K562 (cell line): ENCODE measurements at regions of chr17 and their contacts with region 1.

Region 1: GRCh38 chr17:17641621-17642409 is 39.4 kb upstream of the RAI1 start:
- DNase-seq: peak; percentile 50 to 80 (median 58)
- ATAC-seq: peak; percentile 95
- H3K4me3 ChIP-seq: no peak overlapping the region
- H3K27ac ChIP-seq: no peak overlapping the region
- H3K4me1 ChIP-seq: no peaks in the 10 kb centered on the region; a peak in 1 of 5 replicates
- H3K27me3 ChIP-seq: peaks cover 0 to 6% of the 10 kb centered on the region in 2 experiments; a peak in 2 of 5 replicates
- CTCF ChIP-seq: peak; percentile 82 to 89 (median 87)
- EP300 ChIP-seq: no peak
- POLR2A ChIP-seq: no peak
- RAD21 ChIP-seq: peak; percentile 83 to 93

Region 2: DNA sequence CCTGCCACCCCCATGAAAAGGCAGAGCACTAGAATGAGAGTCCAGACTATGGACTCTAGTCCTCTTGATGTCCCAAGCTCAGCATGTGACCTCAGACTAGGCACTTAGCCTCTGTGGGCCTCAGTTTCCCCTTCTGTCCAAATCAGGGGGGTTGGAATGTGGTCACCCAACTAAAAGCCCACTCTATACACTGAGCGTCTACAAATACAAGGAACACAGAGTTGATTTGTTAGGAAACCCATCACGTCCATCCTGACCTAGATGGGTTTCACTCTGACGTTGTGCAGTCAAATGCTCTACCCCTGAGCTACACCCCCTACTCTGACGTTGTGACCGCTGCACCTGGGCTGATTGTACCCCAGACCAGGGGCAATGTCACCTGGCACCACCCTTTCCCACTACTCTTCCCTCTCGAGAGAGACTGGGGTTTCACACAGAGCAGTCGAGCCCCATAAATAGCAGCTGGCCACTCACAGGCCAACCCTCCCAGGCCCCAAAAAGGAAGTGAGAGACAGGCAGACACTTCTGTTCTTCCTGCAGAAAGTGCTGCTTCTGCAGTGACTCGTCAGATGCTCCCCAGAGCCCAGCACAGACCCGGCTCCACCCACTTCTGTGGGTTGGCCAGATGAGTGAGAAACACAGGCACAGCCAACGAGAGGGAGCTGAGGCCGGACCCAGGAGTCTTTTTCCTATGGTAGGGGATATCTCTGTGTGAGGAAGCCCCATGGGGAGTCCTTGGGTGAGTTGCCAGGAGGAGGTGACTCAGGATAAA is 653.8 kb before region 1 on chr17:
- CTCF ChIA-PET with region 1: no interaction called
- POLR2A ChIA-PET with region 1: no interaction called
- in situ Hi-C with region 1: loop called (anchors 25 kb)
- intact Hi-C with region 1: no loop called
- DNase-seq: peak; percentile 24 to 35 (median 31)
- ATAC-seq: peak; percentile 76
- H3K4me3 ChIP-seq: no peak overlapping the region
- H3K27ac ChIP-seq: no peak overlapping the region
- H3K4me1 ChIP-seq: peaks cover 0 to 4% of the 10 kb centered on the region in 2 experiments; a peak in 3 of 5 replicates
- H3K27me3 ChIP-seq: peaks cover 2 to 28% of the 10 kb centered on the region in 2 experiments; a peak in 3 of 5 replicates
- CTCF ChIP-seq: no peak
- EP300 ChIP-seq: no peak
- POLR2A ChIP-seq: no peak
- RAD21 ChIP-seq: no peak

Region 3: DNA sequence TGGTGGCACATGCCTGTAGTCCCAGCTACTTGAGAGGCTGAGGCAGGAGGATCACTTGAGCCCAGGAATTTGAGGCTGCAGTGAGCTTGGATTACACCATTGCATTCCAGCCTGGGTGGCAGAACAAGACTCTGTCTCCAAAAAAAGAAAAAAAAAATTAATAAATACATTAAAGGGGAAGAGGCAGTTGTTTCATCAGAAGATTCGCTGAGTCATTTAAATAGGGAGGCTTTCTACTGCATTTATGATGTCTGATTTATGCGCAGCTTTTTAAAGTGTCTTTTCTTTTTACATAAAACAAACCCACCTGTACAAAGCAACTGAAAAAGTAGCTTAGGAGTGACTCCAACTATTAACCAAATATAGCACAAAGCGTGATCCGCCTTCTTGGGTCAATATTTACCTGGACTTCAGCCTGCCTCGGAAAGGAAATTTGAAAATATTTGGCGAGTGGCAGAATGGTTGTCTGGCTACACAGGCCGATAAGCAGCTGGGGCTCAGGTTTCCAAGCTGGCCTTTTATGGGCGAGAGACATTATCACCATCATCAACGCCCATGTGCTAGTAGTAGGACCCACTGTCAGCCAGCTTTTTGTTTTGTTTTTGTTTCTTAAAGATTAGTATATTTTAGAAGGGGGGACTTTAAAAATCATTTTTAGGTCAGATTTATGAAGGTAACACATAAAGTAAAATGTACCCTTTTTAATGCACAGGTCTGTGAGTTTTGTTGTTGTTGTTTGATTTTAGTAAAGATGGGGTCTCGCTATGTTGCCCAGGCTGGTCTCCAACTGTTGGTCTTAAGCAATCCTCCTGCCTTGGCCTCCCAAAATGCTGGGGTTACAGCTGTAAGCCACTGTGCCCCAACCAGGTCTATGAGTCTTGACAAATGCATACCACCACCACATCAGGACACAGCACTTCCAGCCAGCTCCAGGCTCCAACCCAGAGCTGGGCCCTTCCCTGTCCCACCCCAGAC is 103.1 kb before region 1 on chr17:
- CTCF ChIA-PET with region 1: no interaction called
- POLR2A ChIA-PET with region 1: no interaction called
- in situ Hi-C with region 1: no loop called
- intact Hi-C with region 1: no loop called
- DNase-seq: peak; percentile 17 to 63 (median 41)
- ATAC-seq: peak; percentile 59
- H3K4me3 ChIP-seq: no peak overlapping the region
- H3K27ac ChIP-seq: 0 out of 3 replicates have a peak overlapping the region, but pooled peaks have one; percentile 55
- H3K4me1 ChIP-seq: peaks cover 5 to 27% of the 10 kb centered on the region in 2 experiments; a peak in 4 of 5 replicates
- H3K27me3 ChIP-seq: no peaks in the 10 kb centered on the region
- CTCF ChIP-seq: no peak
- EP300 ChIP-seq: no peak
- POLR2A ChIP-seq: no peak
- RAD21 ChIP-seq: no peak